Posterior cingulate gyrus (tissue), 11 donors: ENCODE measurements at regions of chr4 and their contacts with region 1.

Region 1: DNA sequence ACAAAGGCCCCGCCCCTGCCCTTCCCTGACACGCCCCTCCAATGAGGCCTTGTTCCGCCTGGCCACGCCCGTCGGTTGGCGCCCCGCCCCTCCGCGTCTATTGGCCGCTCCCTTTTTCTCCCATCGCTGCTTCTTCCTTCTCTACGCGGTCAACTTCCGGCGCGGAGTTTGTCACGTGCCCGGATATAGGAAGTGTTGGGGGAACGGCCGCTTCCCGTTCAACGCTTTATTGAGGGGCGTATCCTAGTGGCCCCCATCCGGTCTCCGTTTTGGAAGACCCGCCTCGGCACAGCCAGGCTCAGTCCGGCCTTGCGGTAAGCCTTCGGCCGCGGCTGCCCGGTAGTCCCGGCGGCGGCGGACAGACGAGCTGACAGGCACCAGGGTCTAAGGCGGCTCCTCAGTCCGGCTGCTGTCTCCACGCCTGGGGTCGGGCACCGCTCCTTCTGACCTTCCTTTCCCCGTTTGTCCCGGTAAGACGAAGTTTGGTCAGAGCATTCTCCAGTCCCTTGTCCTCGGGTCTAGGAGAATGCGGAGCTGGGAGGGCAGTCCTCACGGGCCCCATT is at the start of gene EXOC1:
- DNase-seq: peak; percentile 97 to 100 (median 99)

Region 2: GRCh38 chr4:55345980-55346850 is 507.4 kb before region 1 on chr4 and contains the start of gene SRD5A3:
- intact Hi-C with region 1: loop called (anchors 5 kb)
- DNase-seq: peak; percentile 67 to 97 (median 80)

Region 3: DNA sequence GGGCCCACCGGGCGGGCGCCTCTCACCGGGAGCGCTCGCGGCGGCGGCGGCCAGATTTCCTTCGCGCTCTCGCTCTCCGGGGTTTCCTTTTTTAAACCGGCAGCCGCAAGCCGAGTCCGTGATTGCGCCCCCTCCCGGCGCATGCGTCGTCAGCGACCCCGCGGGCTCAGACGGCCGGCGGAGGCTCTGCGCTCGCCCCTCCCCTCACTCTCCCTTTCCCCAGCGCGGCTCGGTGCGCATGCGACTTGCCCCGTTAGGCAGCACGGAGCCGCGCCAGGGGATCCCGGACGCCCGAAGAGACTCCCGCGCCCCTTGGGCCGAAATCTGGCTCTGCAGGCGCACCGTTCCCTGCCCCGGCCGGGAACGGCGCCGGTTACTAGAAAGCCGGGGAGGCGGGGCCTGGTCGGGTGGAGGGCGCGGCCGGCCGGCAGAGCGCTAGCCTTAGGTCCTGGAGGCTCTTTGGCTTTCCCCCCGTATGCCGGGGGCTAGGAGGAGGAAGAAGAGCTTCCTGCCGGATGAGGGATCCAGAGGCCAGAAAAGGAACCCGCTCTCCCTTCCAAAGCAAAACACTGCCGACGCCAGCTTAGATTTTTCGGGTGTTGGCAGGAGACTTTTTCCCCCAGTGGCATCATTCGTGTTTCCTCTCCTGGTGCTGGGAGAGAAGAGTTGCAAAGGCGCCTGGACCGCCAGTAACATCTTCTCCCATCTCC is 306.7 kb before region 1 on chr4 and contains the start of gene CLOCK:
- intact Hi-C with region 1: loop called (anchors 1 kb)
- DNase-seq: peak; percentile 76 to 97 (median 84)

Region 4: DNA sequence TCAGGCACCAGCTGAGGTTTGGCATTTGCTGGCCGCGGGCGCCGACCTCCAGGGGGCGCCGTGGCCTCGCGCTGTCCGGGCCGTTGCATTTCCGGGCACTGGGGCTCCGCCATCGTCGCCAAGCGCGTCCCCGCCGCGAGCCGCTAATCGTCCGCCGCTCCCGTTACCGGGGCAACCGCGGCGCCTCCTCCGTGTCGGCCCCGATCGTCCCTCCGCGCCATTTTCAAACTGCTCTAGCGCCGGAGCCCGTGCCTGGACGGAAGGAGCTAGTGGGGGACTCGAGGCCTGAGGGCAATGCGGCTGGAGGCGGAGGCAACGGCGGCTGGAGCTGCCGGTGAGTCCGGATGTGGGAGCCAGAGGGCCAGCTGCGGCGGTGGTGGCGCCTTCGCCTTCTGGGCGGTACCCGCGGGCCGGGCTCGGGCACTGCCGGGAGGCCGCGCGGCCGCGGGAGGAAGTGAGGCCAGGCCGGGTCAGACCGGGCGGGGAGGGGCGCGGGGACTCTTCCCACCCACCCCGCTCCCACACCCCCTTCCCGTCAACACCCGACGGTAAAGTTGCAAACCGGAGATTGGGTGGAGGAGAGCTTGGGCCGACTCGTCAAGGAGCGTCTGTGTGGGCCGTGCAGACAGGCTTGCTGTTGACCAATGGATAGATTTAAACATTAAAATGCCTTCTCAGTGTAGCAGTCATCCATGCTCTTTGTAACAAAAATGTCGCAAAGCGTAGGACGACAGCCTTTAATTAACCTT is 95.3 kb after region 1 on chr4 and contains the start of gene CEP135:
- intact Hi-C with region 1: loop called (anchors 5 kb)
- DNase-seq: peak; percentile 85 to 99 (median 94)